ENCODE measurements at regions of chr1 and their contacts with region 1.

Region 1: DNA sequence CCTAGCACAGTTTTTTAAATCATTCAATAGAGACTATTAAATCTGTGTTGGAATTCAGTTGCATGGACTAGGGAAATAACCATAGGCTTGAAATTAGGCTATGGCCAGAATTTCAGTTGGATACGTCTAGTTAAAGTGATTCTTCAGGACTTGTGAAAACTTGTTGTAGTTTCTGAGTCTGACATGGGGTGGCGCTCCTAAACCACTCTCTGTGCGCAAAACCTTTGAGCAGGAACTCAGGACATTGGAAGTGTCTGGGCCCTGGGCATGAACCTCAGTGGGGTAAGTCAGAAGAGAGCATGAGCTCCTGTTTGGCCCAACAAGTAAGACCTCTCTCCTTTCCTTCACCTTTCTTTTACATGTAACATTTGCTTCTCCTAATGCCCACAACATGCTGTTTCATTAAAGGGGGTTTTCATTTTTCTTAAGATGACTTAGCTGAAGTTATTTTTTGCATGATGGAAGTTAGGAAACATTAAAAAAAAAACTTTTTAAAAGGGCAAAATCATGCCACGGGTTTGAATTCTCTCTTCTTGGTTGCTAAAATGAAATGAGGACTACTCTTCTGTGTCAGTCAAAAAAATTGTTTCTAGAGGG is 17.1 kb upstream of the CCDC190 start:
- DNase-seq: peak in 1 of 2 donors; percentile 83
- H3K4me3 ChIP-seq: no peak overlapping the region
- H3K27ac ChIP-seq: no peak overlapping the region
- H3K4me1 ChIP-seq: peaks cover 0 to 7% of the 10 kb centered on the region in 2 donors
- H3K27me3 ChIP-seq: no peaks in the 10 kb centered on the region
- CTCF ChIP-seq: peak; percentile 71 to 81 (median 80)

Region 2: DNA sequence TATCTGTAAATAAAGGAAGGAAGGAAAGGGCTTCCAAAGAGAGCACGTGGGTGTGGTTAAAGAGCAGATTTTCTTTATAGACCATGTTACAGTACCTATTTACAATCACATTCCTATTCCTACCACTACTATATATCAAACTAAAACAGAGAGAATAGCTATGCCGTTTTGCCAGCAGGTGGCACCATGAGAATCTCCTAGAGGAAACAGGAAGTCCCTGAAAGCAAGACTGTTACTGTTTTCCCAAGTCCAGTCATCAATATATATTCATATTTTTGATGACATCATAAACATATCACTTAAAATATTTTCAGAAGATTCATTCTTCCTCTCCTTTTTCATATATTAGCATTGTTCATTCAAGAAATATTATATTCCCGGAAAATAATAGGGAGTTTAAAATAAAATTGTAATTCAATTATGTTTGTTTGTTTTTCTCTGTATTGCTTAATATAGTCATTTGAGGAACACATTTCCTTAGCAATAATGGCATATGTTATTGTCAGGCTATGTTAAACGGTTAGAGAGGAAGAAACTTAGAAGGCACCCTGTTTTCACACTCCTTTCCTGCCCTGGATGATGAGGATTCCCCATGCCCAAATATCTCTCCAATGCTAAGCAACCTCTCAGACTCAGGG is 23.7 kb before region 1 on chr1:
- intact Hi-C with region 1: loop called (anchors 1 kb)
- DNase-seq: peak in 1 of 2 donors; percentile 84
- H3K4me3 ChIP-seq: no peak overlapping the region
- H3K27ac ChIP-seq: peak overlapping the region; percentile 75 to 89
- H3K4me1 ChIP-seq: peaks cover 0 to 31% of the 10 kb centered on the region in 2 donors
- H3K27me3 ChIP-seq: no peaks in the 10 kb centered on the region
- CTCF ChIP-seq: peak; percentile 42 to 79 (median 68)

Region 3: GRCh38 chr1:162905174-162906158 is 27.4 kb after region 1 on chr1:
- intact Hi-C with region 1: loop called (anchors 2 kb)
- DNase-seq: no peak
- H3K4me3 ChIP-seq: no peak overlapping the region
- H3K27ac ChIP-seq: peak overlapping the region; percentile 31 to 38
- H3K4me1 ChIP-seq: peaks cover 0 to 11% of the 10 kb centered on the region in 2 donors
- H3K27me3 ChIP-seq: no peaks in the 10 kb centered on the region
- CTCF ChIP-seq: no peak

Region 4: GRCh38 chr1:163071405-163072255 is 193.5 kb after region 1 on chr1:
- intact Hi-C with region 1: loop called (anchors 2 kb)
- DNase-seq: peak; percentile 11 to 86
- H3K4me3 ChIP-seq: peak overlapping the region; percentile 44 to 69
- H3K27ac ChIP-seq: peak overlapping the region; percentile 54 to 69
- H3K4me1 ChIP-seq: peaks cover 0 to 16% of the 10 kb centered on the region in 2 donors
- H3K27me3 ChIP-seq: no peaks in the 10 kb centered on the region
- CTCF ChIP-seq: peak; percentile 49 to 66 (median 65)

Region 5: DNA sequence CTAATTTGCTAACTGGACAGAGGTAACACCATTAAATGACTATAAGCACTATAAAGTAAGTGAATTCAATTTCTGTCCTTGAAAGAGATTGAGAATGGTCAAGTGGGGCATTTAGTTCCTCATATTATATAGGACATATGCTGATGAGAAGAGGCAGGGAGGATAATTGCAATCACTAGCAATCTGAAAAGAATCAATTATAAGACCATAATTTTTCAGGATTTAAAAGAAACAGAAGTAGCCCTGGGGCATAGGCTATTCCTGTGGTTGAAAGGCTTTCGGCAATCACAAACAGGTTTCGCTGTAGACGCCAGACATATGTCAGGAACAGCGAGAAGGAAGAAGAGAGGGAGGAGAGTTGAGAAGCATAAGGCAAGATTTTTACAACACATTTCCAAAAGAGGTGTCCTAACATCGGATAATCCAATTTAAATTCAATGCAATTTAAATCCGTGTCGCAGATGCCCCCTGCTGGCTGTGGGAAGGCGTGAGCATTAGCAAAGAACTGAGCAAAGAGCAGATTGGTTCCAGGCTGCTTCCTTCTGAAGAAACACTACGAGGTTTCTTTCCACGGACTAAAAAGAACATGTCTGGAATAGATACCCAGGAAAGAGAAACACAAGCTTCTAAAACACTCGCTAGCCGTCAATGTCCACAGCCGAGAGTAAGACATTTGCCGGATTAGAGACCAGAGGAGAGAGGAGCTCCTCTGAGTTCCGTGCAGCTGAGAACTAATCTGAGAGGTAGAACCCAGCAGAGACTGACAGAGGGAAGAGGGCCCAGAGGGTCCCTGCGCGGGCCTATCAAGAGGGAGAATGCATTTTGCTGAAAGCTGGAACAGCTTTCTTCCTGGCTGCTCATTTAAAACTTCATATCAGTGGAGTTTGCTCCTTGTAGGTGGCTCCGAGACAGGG is 296.7 kb after region 1 on chr1:
- intact Hi-C with region 1: loop called (anchors 1 kb)
- DNase-seq: peak in 1 of 2 donors; percentile 82
- H3K4me3 ChIP-seq: peak overlapping the region; percentile 44 to 56
- H3K27ac ChIP-seq: peak overlapping the region; percentile 82 to 85
- H3K4me1 ChIP-seq: peaks cover 0 to 52% of the 10 kb centered on the region in 2 donors
- H3K27me3 ChIP-seq: no peaks in the 10 kb centered on the region
- CTCF ChIP-seq: peak; percentile 84 to 86 (median 84)

Region 6: GRCh38 chr1:163315773-163316374 is 437.8 kb after region 1 on chr1:
- intact Hi-C with region 1: loop called (anchors 1 kb)
- DNase-seq: no peak
- H3K4me3 ChIP-seq: peak overlapping the region in 1 of 2 donors; percentile 41
- H3K27ac ChIP-seq: no peak overlapping the region
- H3K4me1 ChIP-seq: peaks cover 3 to 8% of the 10 kb centered on the region in 2 donors
- H3K27me3 ChIP-seq: no peaks in the 10 kb centered on the region
- CTCF ChIP-seq: peak; percentile 60 to 74 (median 60)

Measured in ascending aorta (tissue), 2 donors.